Calu3 (cell line): ENCODE measurements at regions of chr5 and their contacts with region 1.

Region 1: DNA sequence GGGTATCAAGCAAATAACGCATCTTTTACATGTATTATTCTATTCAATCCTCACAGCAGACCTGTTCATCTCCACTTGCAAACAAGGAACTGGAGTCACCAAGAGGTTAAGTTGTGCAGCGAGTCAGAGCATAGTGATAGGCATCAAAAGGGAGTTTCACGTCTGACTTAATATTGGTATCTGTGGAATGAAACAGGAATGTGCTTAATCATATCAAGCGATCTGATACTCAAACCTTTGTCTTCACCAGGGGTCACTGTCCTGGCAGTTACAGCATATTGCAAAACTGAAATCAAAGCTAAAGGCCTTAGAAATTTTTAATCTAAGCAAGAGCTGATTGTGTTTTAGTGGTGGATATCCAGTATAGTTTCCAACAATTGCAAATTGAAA is 271.6 kb downstream of the PLK2 start:
- DNase-seq: peak; percentile 55
- H3K4me3 Mint-ChIP-seq: no peak overlapping the region
- H3K27ac Mint-ChIP-seq: no peak overlapping the region
- H3K4me1 Mint-ChIP-seq: peaks cover 42% of the 10 kb centered on the region
- H3K27me3 Mint-ChIP-seq: no peaks in the 10 kb centered on the region
- CTCF ChIP-seq: no peak

Region 2: DNA sequence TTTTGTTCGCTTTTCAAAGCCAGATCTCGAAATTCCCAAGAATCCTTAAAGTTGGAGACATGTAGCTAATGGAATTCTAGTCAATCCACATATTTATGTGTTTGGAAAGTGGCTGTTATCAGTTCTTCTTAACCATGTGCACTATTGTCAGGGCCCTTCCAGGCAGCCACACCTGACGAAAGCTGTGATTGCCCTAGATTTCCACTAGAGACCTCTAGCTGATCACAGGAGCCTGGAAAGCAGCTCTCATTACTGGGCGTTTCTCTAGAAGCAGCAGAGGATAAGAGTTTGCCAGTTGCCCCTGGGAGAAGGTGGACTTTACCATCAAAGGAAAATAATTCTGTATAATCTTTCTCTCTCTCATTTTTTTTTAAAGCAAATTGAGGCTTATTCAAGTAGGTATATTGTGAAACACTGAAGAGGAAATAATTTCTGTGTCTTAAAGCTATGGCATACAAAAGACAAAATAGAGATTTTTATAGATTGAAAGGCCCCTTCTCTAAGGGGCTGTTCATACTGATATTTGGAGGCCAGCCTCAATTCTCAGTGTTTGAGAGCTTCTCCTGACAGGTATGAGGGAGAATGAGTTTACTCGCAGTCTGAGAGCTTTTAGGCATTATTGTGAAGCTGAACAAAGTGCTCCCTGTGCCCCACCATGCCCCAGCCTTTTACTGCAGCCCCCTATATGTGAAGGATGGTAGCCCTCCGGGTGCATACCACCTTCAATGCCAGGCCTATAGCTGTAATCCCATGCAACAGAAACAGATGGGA is 300.2 kb before region 1 on chr5:
- CTCF ChIA-PET with region 1: no interaction called
- intact Hi-C with region 1: loop called (anchors 2 kb)
- DNase-seq: peak; percentile 53
- H3K4me3 Mint-ChIP-seq: no peak overlapping the region
- H3K27ac Mint-ChIP-seq: no peak overlapping the region
- H3K4me1 Mint-ChIP-seq: peaks cover 17% of the 10 kb centered on the region
- H3K27me3 Mint-ChIP-seq: no peaks in the 10 kb centered on the region
- CTCF ChIP-seq: no peak

Region 3: GRCh38 chr5:58106754-58107410 is 81.4 kb before region 1 on chr5:
- CTCF ChIA-PET with region 1: no interaction called
- intact Hi-C with region 1: no loop called
- DNase-seq: no peak
- H3K4me3 Mint-ChIP-seq: no peak overlapping the region
- H3K27ac Mint-ChIP-seq: no peak overlapping the region
- H3K4me1 Mint-ChIP-seq: no peaks in the 10 kb centered on the region
- H3K27me3 Mint-ChIP-seq: no peaks in the 10 kb centered on the region
- CTCF ChIP-seq: no peak

Region 4: DNA sequence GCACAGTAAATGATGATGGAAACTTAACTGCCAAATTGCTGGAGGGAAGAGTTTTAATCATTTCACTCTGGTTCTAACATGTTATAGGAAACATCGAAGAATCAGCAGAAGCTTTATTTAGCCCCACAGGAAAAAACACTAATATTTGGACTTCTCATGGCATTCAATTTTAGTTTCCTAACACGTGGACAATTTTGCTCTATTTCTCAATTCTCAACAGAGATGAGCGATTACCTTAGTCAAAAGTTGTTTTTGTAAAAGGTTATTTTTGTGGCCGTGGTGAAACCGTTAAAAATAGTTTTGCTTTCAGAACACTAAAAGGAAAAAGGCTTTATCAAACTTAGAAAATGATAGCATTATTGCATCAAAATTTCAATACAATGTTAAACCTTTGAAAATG is 36.4 kb after region 1 on chr5:
- CTCF ChIA-PET with region 1: no interaction called
- intact Hi-C with region 1: no loop called
- DNase-seq: no peak
- H3K4me3 Mint-ChIP-seq: no peak overlapping the region
- H3K27ac Mint-ChIP-seq: no peak overlapping the region
- H3K4me1 Mint-ChIP-seq: no peaks in the 10 kb centered on the region
- H3K27me3 Mint-ChIP-seq: no peaks in the 10 kb centered on the region
- CTCF ChIP-seq: no peak

Region 5: DNA sequence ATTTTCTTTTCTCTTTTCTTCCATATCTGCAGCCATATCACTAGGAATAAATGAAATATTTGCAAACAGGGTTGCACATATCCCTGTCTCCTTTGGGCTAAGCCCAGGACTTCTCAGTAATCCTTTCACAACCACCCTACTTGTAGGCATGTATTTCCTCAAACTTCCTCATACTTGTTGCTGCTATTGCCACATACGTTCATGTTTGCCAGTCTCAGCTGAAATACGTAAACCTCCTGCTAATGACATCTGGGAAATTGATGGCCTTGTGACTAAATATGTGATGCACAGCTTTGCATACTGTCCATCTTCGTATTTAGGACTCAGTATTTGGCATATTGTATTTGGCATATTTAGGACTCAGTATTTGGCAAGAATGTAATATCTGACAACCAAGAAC is 47.0 kb after region 1 on chr5:
- CTCF ChIA-PET with region 1: interaction called, 5 read pairs
- intact Hi-C with region 1: loop called (anchors 10 kb)
- DNase-seq: peak; percentile 25
- H3K4me3 Mint-ChIP-seq: no peak overlapping the region
- H3K27ac Mint-ChIP-seq: peak overlapping the region; percentile 8
- H3K4me1 Mint-ChIP-seq: peaks cover 13% of the 10 kb centered on the region
- H3K27me3 Mint-ChIP-seq: no peaks in the 10 kb centered on the region
- CTCF ChIP-seq: no peak

Region 6: DNA sequence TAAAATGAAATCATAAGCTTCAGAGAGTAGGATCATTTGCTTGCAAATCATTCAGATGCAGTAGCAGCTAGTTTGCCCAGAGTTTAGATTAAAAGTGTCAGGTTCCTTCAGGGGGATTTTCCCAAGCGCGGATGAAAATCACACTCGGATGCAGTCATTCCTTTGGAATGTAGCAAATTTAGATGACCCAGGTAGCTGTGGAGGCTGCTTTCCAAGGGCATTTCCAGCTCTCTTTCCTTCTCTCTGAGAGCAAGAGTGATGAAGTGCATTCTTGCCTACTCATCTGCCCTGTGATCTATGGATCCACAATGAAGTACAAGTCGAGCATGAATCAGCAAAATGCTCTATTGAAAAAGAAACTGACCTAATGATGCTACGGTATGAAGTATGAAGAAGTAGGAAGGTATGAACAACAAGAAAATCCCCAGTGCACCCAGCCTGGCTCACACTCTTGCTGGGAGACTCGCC is 71.5 kb after region 1 on chr5:
- CTCF ChIA-PET with region 1: no interaction called
- intact Hi-C with region 1: loop called (anchors 5 kb)
- DNase-seq: peak; percentile 57
- H3K4me3 Mint-ChIP-seq: peak overlapping the region; percentile 43
- H3K27ac Mint-ChIP-seq: peak overlapping the region; percentile 81
- H3K4me1 Mint-ChIP-seq: peaks cover 15% of the 10 kb centered on the region
- H3K27me3 Mint-ChIP-seq: no peaks in the 10 kb centered on the region
- CTCF ChIP-seq: no peak